HEK293 (cell line): ENCODE measurements at regions of chr12 and their contacts with region 1.

Region 1: GRCh38 chr12:121476477-121476876 is 76.6 kb downstream of the RNF34 start:
- H3K4me3 ChIP-seq: no peak overlapping the region
- H3K27ac ChIP-seq: no peak overlapping the region
- H3K4me1 ChIP-seq: peaks cover 8% of the 10 kb centered on the region
- CTCF ChIP-seq: no peak

Region 2: GRCh38 chr12:121060149-121061001 is 416.1 kb before region 1 on chr12:
- CTCF ChIA-PET with region 1: no interaction called
- POLR2A ChIA-PET with region 1: no interaction called
- H3K4me3 ChIP-seq: no peak overlapping the region
- H3K27ac ChIP-seq: no peak overlapping the region
- H3K4me1 ChIP-seq: no peaks in the 10 kb centered on the region
- CTCF ChIP-seq: peak; percentile 62; the same call in 1 of the 2 replicates

Region 3: DNA sequence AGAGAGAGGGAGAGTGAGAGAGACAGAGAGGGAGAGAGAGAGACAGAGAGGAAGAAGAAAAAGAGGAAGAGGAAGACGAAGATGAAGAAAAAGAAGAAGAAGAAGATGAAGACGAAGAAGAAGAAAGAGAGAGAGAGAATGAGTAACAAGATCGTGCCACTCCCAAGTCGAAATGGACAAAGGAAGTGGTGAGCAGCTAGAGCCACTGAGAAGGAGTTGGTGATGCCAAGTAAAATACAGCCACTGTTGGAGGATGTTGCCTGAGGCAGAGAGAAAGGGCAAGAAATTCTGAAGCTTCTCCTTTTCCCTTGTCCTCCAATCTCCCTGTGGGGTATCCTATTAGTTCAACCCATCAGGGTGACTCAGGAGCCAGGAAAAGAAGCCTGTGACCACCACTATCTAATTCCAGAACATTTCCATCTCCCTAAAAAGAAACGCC is 111.8 kb before region 1 on chr12:
- CTCF ChIA-PET with region 1: no interaction called
- POLR2A ChIA-PET with region 1: no interaction called
- H3K4me3 ChIP-seq: no peak overlapping the region
- H3K27ac ChIP-seq: no peak overlapping the region
- H3K4me1 ChIP-seq: no peaks in the 10 kb centered on the region; the same call in 1 of the 2 replicates
- CTCF ChIP-seq: no peak

Region 4: GRCh38 chr12:121507245-121507644 is 30.8 kb after region 1 on chr12:
- CTCF ChIA-PET with region 1: no interaction called
- POLR2A ChIA-PET with region 1: no interaction called
- H3K4me3 ChIP-seq: no peak overlapping the region
- H3K27ac ChIP-seq: no peak overlapping the region
- H3K4me1 ChIP-seq: no peaks in the 10 kb centered on the region
- CTCF ChIP-seq: no peak

Region 5: DNA sequence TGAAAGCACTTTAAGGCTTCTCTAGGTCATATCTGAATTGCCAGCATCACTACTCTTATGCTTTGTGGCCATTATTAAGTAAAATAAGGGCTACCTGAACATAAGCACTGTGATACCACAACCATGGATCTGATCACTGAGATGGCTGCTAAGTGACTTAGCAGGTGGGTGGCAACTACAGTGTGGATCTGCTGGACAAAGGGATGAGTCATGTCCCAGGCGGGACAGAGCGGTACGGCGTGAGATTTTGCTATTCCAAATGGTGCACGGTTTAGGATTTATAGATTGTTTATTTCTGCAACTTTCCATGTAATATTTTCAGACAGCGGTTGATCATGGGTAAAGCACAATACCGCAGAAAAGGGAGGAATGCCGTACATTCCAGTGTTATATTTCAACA is 641.5 kb after region 1 on chr12:
- CTCF ChIA-PET with region 1: interaction called, 11 read pairs
- POLR2A ChIA-PET with region 1: no interaction called
- H3K4me3 ChIP-seq: no peak overlapping the region
- H3K27ac ChIP-seq: no peak overlapping the region
- H3K4me1 ChIP-seq: no peaks in the 10 kb centered on the region
- CTCF ChIP-seq: no peak